ENCODE measurements at regions of chr3 and their contacts with region 1.

Region 1: DNA sequence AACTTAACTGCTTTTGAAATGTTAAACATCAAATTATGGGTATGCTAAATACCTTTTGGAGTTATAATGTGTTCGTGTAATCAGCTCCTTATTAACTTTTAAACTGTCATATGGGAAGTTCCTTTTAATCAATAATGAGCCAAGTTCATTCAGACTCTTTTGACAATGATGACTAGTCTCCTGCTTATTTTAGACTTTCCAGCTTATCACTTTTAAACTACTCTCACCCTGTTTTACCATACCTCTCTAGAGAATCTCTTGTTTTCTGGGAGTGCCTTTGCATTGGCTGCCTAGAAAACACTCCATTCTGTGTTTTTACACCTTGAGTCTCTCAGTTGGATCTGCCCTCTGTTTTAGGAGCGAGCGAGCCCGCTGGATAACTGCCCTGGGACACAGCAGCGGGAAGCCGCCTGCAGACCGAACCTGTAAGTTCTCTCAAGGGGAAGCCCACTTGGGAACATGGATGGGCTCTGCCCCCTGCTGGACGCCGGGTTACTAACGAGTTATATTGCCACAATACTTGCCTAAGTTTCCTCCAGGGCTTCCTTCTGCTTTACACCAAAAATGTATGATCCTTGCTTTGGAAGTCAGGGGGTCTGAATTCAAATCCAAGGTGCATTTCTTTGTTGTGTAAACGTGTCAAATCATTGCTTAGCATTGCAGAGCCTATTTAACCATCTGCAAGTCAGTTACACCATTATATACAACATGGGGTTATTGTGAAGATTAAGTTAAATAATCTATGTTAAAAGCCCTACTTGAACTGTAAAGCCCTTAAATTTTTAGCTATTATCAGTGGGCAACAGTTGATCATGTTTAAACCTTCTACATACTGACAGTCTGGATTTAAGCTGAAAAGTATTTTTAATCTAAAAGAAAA is 71.3 kb downstream of the DHX36 start:
- DNase-seq: peak; percentile 89
- H3K4me3 ChIP-seq: peak overlapping the region; percentile 13
- H3K27ac ChIP-seq: no peak overlapping the region
- H3K4me1 ChIP-seq: peaks cover 5% of the 10 kb centered on the region
- H3K27me3 ChIP-seq: no peaks in the 10 kb centered on the region
- CTCF ChIP-seq: peak; percentile 92

Region 2: DNA sequence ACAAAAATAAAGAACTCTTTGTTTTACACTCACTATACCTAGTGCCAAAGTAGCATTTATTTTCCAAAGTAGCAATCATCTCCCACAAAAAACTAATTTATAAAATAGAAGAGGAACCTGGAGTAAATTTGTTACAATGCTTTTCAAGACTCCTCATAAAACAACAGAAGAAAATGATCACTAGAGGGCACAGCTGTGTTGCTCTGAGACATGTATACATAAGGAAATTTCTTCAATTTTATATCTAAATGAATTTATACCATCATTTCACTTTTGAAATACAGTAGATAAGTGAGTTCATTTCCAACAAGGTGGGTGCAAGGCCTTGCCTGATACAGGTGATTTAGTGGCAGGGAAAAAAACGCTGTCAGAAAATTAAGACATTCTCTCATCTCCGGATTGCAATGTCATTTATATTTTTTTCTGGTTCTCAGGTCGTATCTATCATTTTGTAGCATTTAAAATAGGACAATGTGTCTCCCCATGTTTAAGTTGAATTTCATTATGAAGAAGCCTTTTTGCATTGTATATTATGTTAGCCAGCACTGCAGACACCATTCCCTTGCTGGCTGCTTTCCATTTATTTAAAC is 157.1 kb before region 1 on chr3:
- intact Hi-C with region 1: loop called (anchors 10 kb)
- DNase-seq: no peak
- H3K4me3 ChIP-seq: no peak overlapping the region
- H3K27ac ChIP-seq: no peak overlapping the region
- H3K4me1 ChIP-seq: no peaks in the 10 kb centered on the region
- H3K27me3 ChIP-seq: no peaks in the 10 kb centered on the region
- CTCF ChIP-seq: peak; percentile 54

Region 3: DNA sequence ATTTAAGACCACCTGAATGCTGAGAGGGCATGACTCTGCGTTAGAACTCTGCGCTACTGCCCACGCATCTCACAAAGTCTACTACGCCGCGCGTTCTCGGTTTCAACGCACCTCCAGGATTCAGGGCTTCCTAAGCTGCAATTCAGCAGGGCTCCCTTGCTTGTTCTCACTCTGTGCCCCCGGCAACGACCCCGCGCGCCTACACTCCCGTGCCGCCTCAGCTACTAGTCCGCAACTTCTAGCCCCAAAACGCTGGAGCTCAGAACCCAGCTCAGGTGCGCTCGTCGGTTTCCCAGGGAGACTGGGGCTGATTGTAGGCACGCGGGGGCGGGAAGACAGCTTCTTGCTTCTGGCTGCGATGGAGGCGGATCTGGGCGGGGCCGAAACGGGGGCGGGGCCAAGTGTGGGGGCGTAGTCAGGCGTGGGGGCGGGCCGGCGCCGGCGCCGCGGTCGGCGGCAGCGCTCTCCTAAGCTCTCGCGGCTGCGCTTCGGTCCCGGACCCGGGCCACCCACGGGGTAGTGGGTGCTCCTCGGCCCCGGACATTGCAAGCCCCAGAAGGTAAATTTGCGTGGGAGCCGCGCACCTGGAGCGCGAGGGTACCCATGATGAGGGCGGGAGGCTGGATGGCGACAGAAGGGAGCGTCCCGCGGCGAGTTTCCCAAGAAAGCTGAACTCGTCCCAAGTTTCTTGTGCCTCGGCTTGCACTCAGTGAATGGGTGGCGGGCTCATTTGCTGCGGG is 131.9 kb before region 1 on chr3 and contains the start of gene ARHGEF26:
- intact Hi-C with region 1: loop called (anchors 10 kb)
- DNase-seq: peak; percentile 86
- H3K4me3 ChIP-seq: peak within 1 kb of the TSS; percentile 88
- H3K27ac ChIP-seq: peak within 1 kb of the TSS; percentile 56
- H3K4me1 ChIP-seq: peaks cover 35% of the 10 kb centered on the region
- H3K27me3 ChIP-seq: peaks cover 51% of the 10 kb centered on the region
- CTCF ChIP-seq: no peak
- total RNA-seq, gene ARHGEF26: 1.2 TPM

Measured in left ventricle myocardium inferior (tissue), 1 donor.